PC-9 (cell line): ENCODE measurements at regions of chr17 and their contacts with region 1.

Region 1: GRCh38 chr17:49646391-49647255 is 31.3 kb downstream of the SPOP start:
- DNase-seq: peak; percentile 67 to 81
- H3K4me3 ChIP-seq: no peak overlapping the region
- H3K27ac ChIP-seq: peak overlapping the region; percentile 50
- H3K4me1 ChIP-seq: peaks cover 17% of the 10 kb centered on the region
- H3K27me3 ChIP-seq: no peaks in the 10 kb centered on the region
- CTCF ChIP-seq: no peak

Region 2: GRCh38 chr17:47978324-47978723 is 1668.3 kb before region 1 on chr17:
- CTCF ChIA-PET with region 1: no interaction called
- POLR2A ChIA-PET with region 1: interaction called, 13 read pairs
- intact Hi-C with region 1: no loop called
- DNase-seq: peak in 1 of 2 experiments; percentile 32
- H3K4me3 ChIP-seq: no peak overlapping the region
- H3K27ac ChIP-seq: no peak overlapping the region
- H3K4me1 ChIP-seq: no peaks in the 10 kb centered on the region
- H3K27me3 ChIP-seq: no peaks in the 10 kb centered on the region
- CTCF ChIP-seq: peak; percentile 87

Region 3: GRCh38 chr17:49624896-49625295 is 21.7 kb before region 1 on chr17:
- CTCF ChIA-PET with region 1: no interaction called
- POLR2A ChIA-PET with region 1: no interaction called
- intact Hi-C with region 1: no loop called
- DNase-seq: no peak
- H3K4me3 ChIP-seq: no peak overlapping the region
- H3K27ac ChIP-seq: no peak overlapping the region
- H3K4me1 ChIP-seq: no peaks in the 10 kb centered on the region
- H3K27me3 ChIP-seq: no peaks in the 10 kb centered on the region
- CTCF ChIP-seq: no peak

Region 4: GRCh38 chr17:49788478-49789242 is 142.0 kb after region 1 on chr17 and contains the start of gene KAT7:
- CTCF ChIA-PET with region 1: no interaction called
- POLR2A ChIA-PET with region 1: no interaction called
- intact Hi-C with region 1: no loop called
- DNase-seq: peak; percentile 98 to 99
- H3K4me3 ChIP-seq: peak within 1 kb of the TSS; percentile 88
- H3K27ac ChIP-seq: peak within 1 kb of the TSS; percentile 91
- H3K4me1 ChIP-seq: peaks cover 24% of the 10 kb centered on the region
- H3K27me3 ChIP-seq: no peaks in the 10 kb centered on the region
- CTCF ChIP-seq: 0 out of 2 replicates have a peak, but pooled peaks have one; percentile 19
- total RNA-seq, gene KAT7: 41.6 and 57.0 TPM in 2 replicates